Endothelial cell of umbilical vein (primary cell): ENCODE measurements at regions of chr1 and their contacts with region 1.

Region 1: DNA sequence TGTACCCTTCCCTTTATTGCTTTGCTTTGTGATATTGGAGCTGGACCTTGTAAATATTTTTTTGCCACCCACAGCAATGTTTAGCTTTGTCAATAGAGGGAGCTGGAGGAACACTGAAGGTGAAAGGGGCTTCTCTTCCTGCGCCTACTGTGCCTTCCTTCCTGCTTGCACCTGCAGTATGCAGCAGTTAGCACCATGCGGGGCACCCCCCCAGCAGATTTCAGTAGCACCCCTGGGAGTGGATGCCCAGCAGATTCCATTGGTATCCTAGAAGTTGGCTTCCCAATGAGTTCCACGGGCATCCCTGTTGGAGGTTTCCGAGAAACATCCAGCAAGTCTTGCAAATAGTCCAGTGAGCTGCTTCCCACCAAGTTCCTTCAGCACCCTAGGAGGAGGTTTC is 25.6 kb downstream of the S100A10 start:
- DNase-seq: peak; percentile 56
- H3K4me3 ChIP-seq: no peak overlapping the region
- H3K27ac ChIP-seq: no peak overlapping the region
- H3K4me1 ChIP-seq: peaks cover 21% of the 10 kb centered on the region
- H3K27me3 ChIP-seq: no peaks in the 10 kb centered on the region
- CTCF ChIP-seq: peak; percentile 55 to 60
- POLR2A ChIP-seq: no peak

Region 2: GRCh38 chr1:151888972-151889570 is 79.0 kb before region 1 on chr1:
- CTCF ChIA-PET with region 1: interaction called, 8 read pairs
- POLR2A ChIA-PET with region 1: no interaction called
- dilution Hi-C with region 1: no loop called
- intact Hi-C with region 1: loop called (anchors 1 kb)
- DNase-seq: peak; percentile 28
- H3K4me3 ChIP-seq: no peak overlapping the region
- H3K27ac ChIP-seq: no peak overlapping the region
- H3K4me1 ChIP-seq: peaks cover 15% of the 10 kb centered on the region
- H3K27me3 ChIP-seq: no peaks in the 10 kb centered on the region
- CTCF ChIP-seq: peak; percentile 20 to 22
- POLR2A ChIP-seq: no peak

Region 3: DNA sequence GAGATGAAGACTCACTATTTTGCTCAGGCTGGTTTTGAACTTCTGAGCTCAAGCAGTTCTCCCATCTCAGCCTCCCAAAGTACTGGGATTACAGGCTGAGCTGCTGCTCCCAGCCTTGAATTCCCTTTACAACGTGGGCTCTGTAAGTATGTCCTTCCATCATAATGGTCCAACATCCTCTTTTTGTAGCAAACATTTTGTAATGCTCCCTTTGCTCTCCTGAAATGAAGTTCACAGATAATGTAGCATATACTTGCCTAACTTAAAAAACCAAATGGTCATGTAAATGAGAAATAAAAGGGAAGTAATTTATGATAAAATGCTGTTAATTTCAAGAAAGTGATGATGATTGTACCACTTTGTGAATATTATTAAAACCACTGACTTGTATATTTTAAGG is 28.3 kb before region 1 on chr1:
- CTCF ChIA-PET with region 1: interaction called, 79 read pairs
- POLR2A ChIA-PET with region 1: no interaction called
- dilution Hi-C with region 1: no loop called
- intact Hi-C with region 1: loop called (anchors 1 kb)
- DNase-seq: no peak
- H3K4me3 ChIP-seq: no peak overlapping the region
- H3K27ac ChIP-seq: no peak overlapping the region
- H3K4me1 ChIP-seq: peaks cover 6% of the 10 kb centered on the region
- H3K27me3 ChIP-seq: no peaks in the 10 kb centered on the region
- CTCF ChIP-seq: no peak
- POLR2A ChIP-seq: no peak

Region 4: GRCh38 chr1:151984313-151984956 is 16.4 kb after region 1 on chr1:
- CTCF ChIA-PET with region 1: interaction called, 435 read pairs
- POLR2A ChIA-PET with region 1: interaction called, 3 read pairs
- dilution Hi-C with region 1: no loop called
- intact Hi-C with region 1: loop called (anchors 1 kb)
- DNase-seq: no peak
- H3K4me3 ChIP-seq: no peak overlapping the region
- H3K27ac ChIP-seq: no peak overlapping the region
- H3K4me1 ChIP-seq: peaks cover 43% of the 10 kb centered on the region
- H3K27me3 ChIP-seq: no peaks in the 10 kb centered on the region
- CTCF ChIP-seq: no peak
- POLR2A ChIP-seq: no peak

Region 5: GRCh38 chr1:151993654-151994496 is 25.8 kb after region 1 on chr1 and contains the start of gene S100A10:
- CTCF ChIA-PET with region 1: interaction called, 435 read pairs
- POLR2A ChIA-PET with region 1: interaction called, 6 read pairs
- dilution Hi-C with region 1: no loop called
- intact Hi-C with region 1: loop called (anchors 1 kb)
- DNase-seq: peak; percentile 67
- H3K4me3 ChIP-seq: peak within 1 kb of the TSS; percentile 22 to 70 (median 67)
- H3K27ac ChIP-seq: peak within 1 kb of the TSS; percentile 83
- H3K4me1 ChIP-seq: peaks cover 44% of the 10 kb centered on the region
- H3K27me3 ChIP-seq: no peaks in the 10 kb centered on the region
- CTCF ChIP-seq: no peak
- POLR2A ChIP-seq: peak; percentile 87
- total RNA-seq, gene S100A10: 650 and 779 TPM in 2 replicates

Region 6: DNA sequence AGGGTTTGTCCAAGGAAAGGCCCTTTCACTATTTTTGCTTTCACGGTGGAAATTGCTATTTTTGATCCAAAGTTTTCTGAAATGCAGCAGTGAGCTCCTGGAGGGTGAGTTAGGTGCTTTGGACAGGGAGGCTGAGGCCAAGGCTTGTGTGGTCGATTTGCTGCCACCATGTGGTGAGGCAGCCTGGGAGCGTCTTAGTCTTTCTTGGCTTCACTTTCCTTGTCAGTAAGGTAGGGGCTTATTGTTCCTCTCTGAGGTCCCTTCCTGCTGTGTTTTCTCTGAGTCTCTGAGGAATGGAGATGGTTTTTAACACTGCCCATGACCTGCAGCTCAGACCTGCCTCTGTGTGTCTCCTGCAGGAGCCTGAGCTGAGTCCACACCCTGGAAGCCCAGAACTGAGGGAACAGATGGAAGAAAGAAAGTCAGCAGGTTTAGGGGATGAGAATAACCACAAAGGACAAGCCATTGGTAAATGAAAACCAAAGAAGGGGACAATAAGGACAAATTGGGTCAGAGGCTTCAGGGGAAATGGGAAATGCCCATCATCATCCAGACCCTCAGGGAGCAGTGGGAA is 45.7 kb after region 1 on chr1:
- CTCF ChIA-PET with region 1: interaction called, 28 read pairs
- POLR2A ChIA-PET with region 1: no interaction called
- dilution Hi-C with region 1: no loop called
- intact Hi-C with region 1: loop called (anchors 1 kb)
- DNase-seq: peak; percentile 48
- H3K4me3 ChIP-seq: no peak overlapping the region
- H3K27ac ChIP-seq: no peak overlapping the region
- H3K4me1 ChIP-seq: no peaks in the 10 kb centered on the region
- H3K27me3 ChIP-seq: peaks cover 10 to 36% of the 10 kb centered on the region in 2 experiments
- CTCF ChIP-seq: peak; percentile 63 to 81
- POLR2A ChIP-seq: no peak

Region 7: GRCh38 chr1:152047730-152048402 is 79.8 kb after region 1 on chr1:
- CTCF ChIA-PET with region 1: no interaction called
- POLR2A ChIA-PET with region 1: no interaction called
- dilution Hi-C with region 1: no loop called
- intact Hi-C with region 1: no loop called
- DNase-seq: peak; percentile 91
- H3K4me3 ChIP-seq: no peak overlapping the region
- H3K27ac ChIP-seq: peak overlapping the region; percentile 25
- H3K4me1 ChIP-seq: peaks cover 18% of the 10 kb centered on the region
- H3K27me3 ChIP-seq: peaks cover 7 to 27% of the 10 kb centered on the region in 2 experiments
- CTCF ChIP-seq: peak; percentile 61 to 80
- POLR2A ChIP-seq: no peak

Region 8: GRCh38 chr1:152309955-152310354 is 341.9 kb after region 1 on chr1:
- CTCF ChIA-PET with region 1: no interaction called
- POLR2A ChIA-PET with region 1: no interaction called
- dilution Hi-C with region 1: no loop called
- intact Hi-C with region 1: no loop called
- DNase-seq: no peak
- H3K4me3 ChIP-seq: no peak overlapping the region
- H3K27ac ChIP-seq: no peak overlapping the region
- H3K4me1 ChIP-seq: no peaks in the 10 kb centered on the region
- H3K27me3 ChIP-seq: no peaks in the 10 kb centered on the region
- CTCF ChIP-seq: no peak
- POLR2A ChIP-seq: no peak